ENCODE measurements at regions of chr17 and their contacts with region 1.

Region 1: DNA sequence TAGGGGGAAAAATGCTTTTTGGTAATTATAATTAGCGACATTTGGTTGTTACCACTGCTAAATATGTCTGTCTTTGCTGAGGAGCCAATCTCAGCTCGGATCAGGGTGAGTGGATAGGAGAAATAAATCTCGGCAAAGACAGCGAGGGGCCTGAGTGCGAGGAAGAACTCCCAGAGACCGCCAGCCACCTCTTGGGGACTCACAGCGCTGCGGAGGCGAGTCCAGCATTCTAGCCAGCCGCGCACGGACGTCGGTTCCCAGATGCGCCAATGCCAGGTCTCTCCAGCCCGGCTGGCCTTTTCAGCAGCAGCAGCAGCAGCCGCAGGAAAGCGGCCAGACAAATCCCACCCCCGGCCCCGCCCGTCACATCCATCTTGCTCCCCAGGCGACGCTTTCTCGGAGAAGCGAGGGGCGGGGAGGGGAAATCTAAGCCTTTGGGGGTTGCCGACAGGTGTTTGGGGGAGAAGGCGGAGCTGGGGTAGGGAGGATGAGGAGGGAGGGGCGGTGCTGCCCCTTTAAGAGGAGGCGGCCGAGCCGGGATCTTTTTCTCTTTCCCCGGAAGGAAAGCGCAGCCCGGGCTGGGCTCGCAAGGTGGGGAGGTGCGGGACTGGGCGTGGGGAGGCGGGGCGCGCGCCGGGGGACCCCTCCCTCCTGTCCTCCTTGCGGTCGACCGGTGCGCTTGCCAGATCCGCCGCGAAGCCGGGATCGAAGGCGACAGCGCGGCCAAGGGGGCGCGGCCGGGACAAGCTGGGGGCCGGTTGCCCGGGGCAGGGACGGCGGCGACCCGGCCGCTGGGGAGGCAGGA is at the start of gene ITGA3:
- DNase-seq: peak; percentile 67 to 94
- H3K4me3 ChIP-seq: peak within 1 kb of the TSS; percentile 88 to 95
- H3K27ac ChIP-seq: peak within 1 kb of the TSS; percentile 97 to 99
- H3K4me1 ChIP-seq: peaks cover 0 to 72% (median 51%) of the 10 kb centered on the region in 4 donors
- H3K27me3 ChIP-seq: no peaks in the 10 kb centered on the region
- CTCF ChIP-seq: no peak

Region 2: DNA sequence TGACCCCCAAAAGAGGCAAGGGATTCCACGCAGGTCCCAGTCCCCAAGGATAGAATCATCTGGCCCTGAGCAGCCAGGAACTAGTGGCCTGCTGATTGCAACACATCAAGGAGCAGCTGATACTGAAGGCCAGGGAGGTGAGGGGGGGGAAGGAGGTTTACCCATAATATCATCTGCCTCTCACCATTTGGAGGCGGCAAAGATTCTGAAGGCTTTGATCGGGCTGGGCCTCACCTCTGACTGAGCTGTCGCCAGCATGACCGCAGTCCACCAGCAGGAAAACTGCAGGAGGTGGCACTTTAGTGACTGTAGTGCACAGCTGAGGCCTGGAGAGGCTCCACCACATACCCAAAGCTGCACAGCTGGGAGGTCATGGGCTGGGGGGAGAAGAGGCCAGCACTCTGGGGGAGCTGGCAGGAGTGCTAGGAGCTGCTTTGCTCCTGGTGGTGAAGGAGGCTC is 20.2 kb before region 1 on chr17:
- intact Hi-C with region 1: loop called (anchors 2 kb)
- DNase-seq: no peak
- H3K4me3 ChIP-seq: no peak overlapping the region
- H3K27ac ChIP-seq: peak overlapping the region; percentile 83 to 89
- H3K4me1 ChIP-seq: peaks cover 0 to 80% (median 49%) of the 10 kb centered on the region in 4 donors
- H3K27me3 ChIP-seq: no peaks in the 10 kb centered on the region
- CTCF ChIP-seq: no peak

Region 3: GRCh38 chr17:50297407-50297865 is 241.8 kb after region 1 on chr17:
- intact Hi-C with region 1: no loop called
- DNase-seq: peak; percentile 77 to 85
- H3K4me3 ChIP-seq: no peak overlapping the region
- H3K27ac ChIP-seq: no peak overlapping the region
- H3K4me1 ChIP-seq: no peaks in the 10 kb centered on the region
- H3K27me3 ChIP-seq: no peaks in the 10 kb centered on the region
- CTCF ChIP-seq: peak; percentile 95 to 99

Measured in tibial artery (tissue), 4 donors.